Activated CD8-positive, alpha-beta memory T cell treated with anti-CD3 and anti-CD28 coated beads, Interleukin-2, amount 10 ng/mL, durations not matched to agents 7 days and 5 days (primary cell): ENCODE measurements at regions of chr18 and their contacts with region 1.

Region 1: DNA sequence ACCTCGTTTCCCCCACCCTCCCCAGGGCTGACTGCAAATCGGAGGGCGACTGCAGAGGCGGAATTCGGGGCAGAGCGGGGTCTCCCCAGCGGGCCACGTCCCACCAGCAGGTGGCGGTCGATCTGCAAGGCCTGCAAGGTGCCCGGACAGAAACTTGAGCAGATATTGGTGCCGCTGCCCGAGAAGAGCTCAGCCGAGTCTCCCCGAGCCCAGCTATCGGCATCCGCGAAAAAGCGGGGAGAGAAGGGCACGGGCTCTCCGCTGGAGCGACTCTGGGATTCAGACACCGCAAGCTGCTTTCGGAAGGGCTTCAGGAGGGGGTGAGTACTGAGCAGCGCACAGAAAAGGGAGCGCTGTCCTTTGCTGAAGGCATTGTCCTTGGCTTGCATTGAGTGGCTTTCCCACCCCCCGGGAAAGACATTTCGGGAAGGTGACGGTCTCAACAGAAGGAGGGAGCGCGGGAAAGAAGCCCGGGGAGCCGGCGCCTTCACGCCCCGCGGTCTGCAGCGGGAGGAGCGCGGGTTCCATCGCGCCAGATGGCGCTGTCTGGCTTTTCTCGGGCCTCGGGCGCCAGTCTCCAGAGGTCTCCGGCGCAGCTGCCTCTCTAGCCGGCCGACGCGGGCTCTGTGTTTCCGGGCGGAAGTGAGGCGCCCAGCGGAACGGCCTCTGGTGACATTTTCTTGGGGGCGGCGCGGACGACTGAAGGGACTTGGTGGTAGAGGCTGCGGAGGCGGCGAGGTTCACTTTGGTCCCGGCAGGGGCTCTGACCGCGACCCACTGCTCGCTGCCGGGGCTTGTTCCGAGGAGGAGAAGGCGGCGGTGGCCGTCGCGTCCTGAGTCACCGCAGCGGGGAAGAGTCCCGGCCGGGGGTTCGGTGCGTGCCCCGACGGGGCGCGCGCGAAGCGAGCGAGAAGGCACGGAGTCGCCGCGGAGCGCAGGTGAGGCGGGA is 69.5 kb downstream of the HAUS1 start:
- DNase-seq: peak; percentile 96
- ATAC-seq: peak; percentile 91
- H3K4me3 Mint-ChIP-seq: peak overlapping the region; percentile 94
- H3K27ac Mint-ChIP-seq: peak overlapping the region; percentile 99
- H3K4me1 Mint-ChIP-seq: peaks cover 46% of the 10 kb centered on the region
- H3K27me3 Mint-ChIP-seq: peaks cover 3% of the 10 kb centered on the region

Region 2: DNA sequence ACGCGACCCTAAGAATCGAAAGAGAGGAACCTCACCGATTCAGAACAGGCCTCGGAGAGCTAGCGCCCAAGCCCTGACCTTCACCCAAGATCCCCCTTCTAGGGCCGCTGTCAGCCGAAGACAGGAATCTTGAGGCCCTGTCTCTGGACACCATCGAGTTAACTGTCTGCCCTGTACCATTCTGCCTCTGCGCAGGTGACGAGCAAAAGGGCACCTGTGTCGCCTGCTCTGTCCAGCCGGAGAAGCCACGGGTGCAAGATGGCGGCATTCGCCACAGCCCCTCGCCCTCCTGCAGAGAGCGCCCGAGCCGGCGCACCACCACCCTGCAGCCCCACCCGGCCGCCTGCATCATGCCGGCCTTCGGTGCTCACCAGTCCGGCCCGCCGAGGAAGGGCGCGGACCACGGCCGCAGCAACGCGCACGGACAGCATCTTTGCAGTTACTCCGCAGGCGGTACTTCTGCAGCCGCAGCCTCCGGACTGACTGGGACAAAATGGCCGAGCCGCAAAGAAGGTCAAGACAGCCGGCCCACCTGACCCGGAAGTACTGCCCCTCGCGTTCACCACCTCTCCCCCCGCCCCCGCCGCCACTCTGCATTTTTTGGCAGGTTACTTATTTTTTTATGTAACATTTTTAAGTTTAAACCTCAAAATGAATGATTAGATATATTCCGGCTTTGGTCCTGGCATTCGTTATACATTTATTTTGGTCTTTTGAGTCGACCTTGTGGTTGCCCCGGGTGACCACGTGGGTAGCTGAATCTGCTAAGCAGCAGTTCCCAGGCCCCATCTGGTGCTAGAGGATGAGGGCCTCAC is 75.7 kb before region 1 on chr18 and contains the start of gene ATP5F1A:
- CTCF ChIA-PET with region 1: interaction called, 12 read pairs
- DNase-seq: peak; percentile 90
- ATAC-seq: peak; percentile 86
- H3K4me3 Mint-ChIP-seq: peak within 1 kb of the TSS; percentile 95
- H3K27ac Mint-ChIP-seq: peak within 1 kb of the TSS; percentile 99
- H3K4me1 Mint-ChIP-seq: peaks cover 26% of the 10 kb centered on the region
- H3K27me3 Mint-ChIP-seq: no peaks in the 10 kb centered on the region
- total RNA-seq, gene ATP5F1A: 341 to 485 TPM

Region 3: DNA sequence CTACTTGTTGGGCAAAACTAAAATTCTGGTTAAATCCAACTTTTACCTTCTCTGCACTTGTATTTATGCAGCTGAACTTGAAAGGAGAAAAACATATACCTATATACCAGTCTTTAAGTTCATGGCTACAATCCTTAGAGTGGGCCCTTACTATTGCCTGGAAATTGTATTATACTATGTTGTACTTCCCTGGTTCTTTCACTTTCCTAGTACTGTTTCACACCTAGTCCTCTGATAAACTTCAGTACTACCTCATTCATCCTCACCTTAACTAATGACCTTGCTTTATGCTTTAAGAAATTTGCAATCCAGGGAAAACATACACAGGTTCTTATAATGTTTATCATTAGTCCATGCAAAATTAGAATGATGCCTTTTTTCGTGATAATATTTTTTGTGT is 34.3 kb after region 1 on chr18:
- CTCF ChIA-PET with region 1: interaction called, 35 read pairs
- DNase-seq: no peak
- ATAC-seq: no peak
- H3K4me3 Mint-ChIP-seq: no peak overlapping the region
- H3K27ac Mint-ChIP-seq: no peak overlapping the region
- H3K4me1 Mint-ChIP-seq: peaks cover 60% of the 10 kb centered on the region
- H3K27me3 Mint-ChIP-seq: no peaks in the 10 kb centered on the region

Region 4: DNA sequence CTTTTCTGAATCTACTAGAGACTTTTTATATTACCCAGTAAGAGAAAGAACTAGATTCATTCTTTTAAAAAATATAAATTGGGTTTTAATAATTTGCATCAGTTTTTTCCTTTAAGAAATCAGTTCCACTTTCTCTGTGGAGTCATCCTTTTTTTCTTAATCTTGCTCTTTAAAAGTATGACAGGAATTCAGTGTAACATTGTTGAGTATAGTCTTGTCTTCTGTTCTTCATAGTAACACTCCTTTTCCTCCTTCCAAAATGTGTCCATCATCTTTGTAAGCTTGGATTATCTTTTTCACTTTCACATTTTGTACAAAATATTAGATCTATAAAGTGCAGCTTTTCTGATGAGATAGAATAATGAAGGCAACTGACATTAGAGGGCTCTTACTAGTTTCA is 65.9 kb after region 1 on chr18:
- CTCF ChIA-PET with region 1: interaction called, 62 read pairs
- DNase-seq: no peak
- ATAC-seq: no peak
- H3K4me3 Mint-ChIP-seq: no peak overlapping the region
- H3K27ac Mint-ChIP-seq: no peak overlapping the region
- H3K4me1 Mint-ChIP-seq: peaks cover 9% of the 10 kb centered on the region
- H3K27me3 Mint-ChIP-seq: no peaks in the 10 kb centered on the region

Region 5: GRCh38 chr18:46265196-46266156 is 91.8 kb after region 1 on chr18:
- CTCF ChIA-PET with region 1: interaction called, 12 read pairs
- DNase-seq: no peak
- ATAC-seq: peak; percentile 20
- H3K4me3 Mint-ChIP-seq: no peak overlapping the region
- H3K27ac Mint-ChIP-seq: peak overlapping the region; percentile 2
- H3K4me1 Mint-ChIP-seq: peaks cover 54% of the 10 kb centered on the region
- H3K27me3 Mint-ChIP-seq: no peaks in the 10 kb centered on the region

Region 6: GRCh38 chr18:46291149-46291548 is 117.5 kb after region 1 on chr18:
- CTCF ChIA-PET with region 1: interaction called, 11 read pairs
- DNase-seq: no peak
- ATAC-seq: no peak
- H3K4me3 Mint-ChIP-seq: no peak overlapping the region
- H3K27ac Mint-ChIP-seq: no peak overlapping the region
- H3K4me1 Mint-ChIP-seq: no peaks in the 10 kb centered on the region
- H3K27me3 Mint-ChIP-seq: no peaks in the 10 kb centered on the region